ENCODE measurements at regions of chr1 and their contacts with region 1.

Region 1: GRCh38 chr1:224447251-224447650 is 12.7 kb upstream of the WDR26 start:
- DNase-seq: peak; percentile 91

Region 2: GRCh38 chr1:223712194-223712849 is 734.9 kb before region 1 on chr1 and contains the start of gene CAPN2:
- intact Hi-C with region 1: loop called in 1 of 2 experiments (anchors 5 kb)
- DNase-seq: peak; percentile 96
- total RNA-seq, gene CAPN2: 234 to 289 TPM